Dorsolateral prefrontal cortex (tissue), 120 donors: ENCODE measurements at regions of chr11 and their contacts with region 1.

Region 1: DNA sequence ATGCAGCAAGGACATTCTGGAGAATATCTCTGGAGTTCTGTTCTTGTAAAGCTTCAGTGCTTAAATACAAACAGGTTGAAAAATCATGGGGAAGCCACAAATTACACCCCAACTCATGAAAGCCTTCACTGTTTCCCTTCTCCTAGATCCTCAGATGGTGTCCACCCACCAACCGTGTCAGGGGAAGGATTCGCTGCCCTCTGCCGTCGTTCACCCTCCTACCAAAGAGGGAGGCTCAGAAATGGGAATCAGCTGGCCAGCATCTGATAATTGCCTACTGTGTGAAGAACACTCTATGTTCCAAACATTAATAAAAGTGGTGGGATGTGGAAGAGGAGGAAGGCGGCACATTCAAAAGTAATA is 7.4 kb upstream of the HEPACAM start:
- DNase-seq: peak in 9 of 10 donors; percentile 62 to 85 (median 77)
- H3K4me3 ChIP-seq: peak overlapping the region in 32 of 59 donors; percentile 6 to 52 (median 28)
- H3K27ac ChIP-seq: peak overlapping the region; percentile 83 to 100 (median 97)
- H3K27me3 ChIP-seq: no peaks in the 10 kb centered on the region
- CTCF ChIP-seq: peak in 52 of 56 donors; percentile 12 to 72 (median 46)

Region 2: GRCh38 chr11:124920870-124921609 is 22.2 kb before region 1 on chr11:
- intact Hi-C with region 1: loop called in 1 of 2 experiments (anchors 1 kb)
- DNase-seq: peak in 3 of 10 donors; percentile 28 to 58 (median 46)
- H3K4me3 ChIP-seq: peak overlapping the region in 58 of 59 donors; percentile 17 to 61 (median 45)
- H3K27ac ChIP-seq: peak overlapping the region in 55 of 59 donors; percentile 1 to 100 (median 95)
- H3K27me3 ChIP-seq: no peaks in the 10 kb centered on the region
- CTCF ChIP-seq: peak in 7 of 56 donors; percentile 4 to 25 (median 12)